Naive thymus-derived CD4-positive, alpha-beta T cell (primary cell): ENCODE measurements at regions of chr19 and their contacts with region 1.

Region 1: GRCh38 chr19:8641908-8642547 is 11.6 kb downstream of the NFILZ start:
- DNase-seq: peak in 7 of 9 donors; percentile 28 to 67 (median 51)
- ATAC-seq: peak; percentile 56
- H3K4me3 ChIP-seq: no peak overlapping the region
- H3K4me3 Mint-ChIP-seq: peak overlapping the region in 1 of 10 donors; percentile 18
- H3K27ac ChIP-seq: no peak overlapping the region
- H3K27ac Mint-ChIP-seq: peak overlapping the region in 1 of 9 donors; percentile 62
- H3K4me1 ChIP-seq: no peaks in the 10 kb centered on the region
- H3K4me1 Mint-ChIP-seq: peaks cover 5 to 16% (median 7%) of the 10 kb centered on the region in 7 donors
- H3K27me3 ChIP-seq: no peaks in the 10 kb centered on the region
- H3K27me3 Mint-ChIP-seq: peaks cover 12 to 32% (median 15%) of the 10 kb centered on the region in 5 donors

Region 2: DNA sequence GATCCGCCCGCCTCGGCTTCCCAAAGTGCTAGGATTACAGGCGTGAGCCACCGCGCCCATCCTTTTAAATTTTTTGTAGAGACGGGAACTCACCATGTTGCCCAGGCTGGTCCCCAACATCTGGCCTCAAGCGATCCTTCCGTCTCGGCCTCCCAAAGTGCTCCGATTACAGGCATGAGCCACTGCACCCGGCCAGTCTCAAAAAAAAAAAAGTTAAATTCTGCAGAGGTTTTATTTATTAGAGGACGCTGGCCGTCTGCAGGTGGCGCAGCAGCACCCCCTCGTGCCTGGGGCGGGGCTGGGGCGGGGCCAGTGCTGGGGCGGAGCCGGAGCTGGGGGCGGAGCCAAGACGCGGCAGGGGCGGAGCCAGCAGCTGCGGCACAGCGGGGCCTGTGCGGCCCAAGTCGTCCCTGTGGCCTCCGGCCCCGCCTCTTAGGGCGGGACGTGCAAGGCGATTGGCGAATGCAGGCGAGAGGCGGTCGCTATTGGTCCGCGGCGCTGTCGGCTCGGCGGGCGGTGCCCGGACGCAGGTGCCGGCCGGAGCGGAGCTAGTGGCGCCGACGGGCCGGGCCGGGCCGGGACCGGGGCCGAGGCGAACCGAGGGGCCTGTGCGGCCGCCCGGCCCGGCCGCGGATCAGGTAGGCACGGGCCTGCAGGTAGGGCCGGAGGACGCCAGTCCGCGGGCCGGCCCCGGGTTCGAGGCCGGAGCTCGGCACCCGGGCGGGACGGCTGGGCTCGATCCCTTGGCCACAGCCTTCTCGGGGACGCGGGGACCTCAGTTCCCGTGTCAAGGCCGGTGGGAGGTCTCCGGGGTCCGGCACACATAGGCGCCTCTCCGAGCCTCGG is 229.0 kb before region 1 on chr19 and contains the start of gene MARCHF2:
- CTCF ChIA-PET with region 1: interaction called, 5 read pairs
- POLR2A ChIA-PET with region 1: no interaction called
- intact Hi-C with region 1: loop called in 1 of 2 experiments (anchors 1 kb)
- DNase-seq: peak; percentile 91 to 96 (median 93)
- ATAC-seq: peak; percentile 100
- H3K4me3 ChIP-seq: peak within 1 kb of the TSS; percentile 72
- H3K4me3 Mint-ChIP-seq: peak within 1 kb of the TSS; percentile 58 to 85 (median 71)
- H3K27ac ChIP-seq: peak within 1 kb of the TSS; percentile 76
- H3K27ac Mint-ChIP-seq: peak within 1 kb of the TSS in 6 of 9 donors; percentile 11 to 84 (median 34)
- H3K4me1 ChIP-seq: peaks cover 0 to 6% of the 10 kb centered on the region in 2 donors
- H3K4me1 Mint-ChIP-seq: peaks cover 0 to 15% (median 13%) of the 10 kb centered on the region in 7 donors
- H3K27me3 ChIP-seq: no peaks in the 10 kb centered on the region
- H3K27me3 Mint-ChIP-seq: no peaks in the 10 kb centered on the region
- total RNA-seq, gene MARCHF2: 18.0 to 42.1 (median 23.4) TPM

Region 3: DNA sequence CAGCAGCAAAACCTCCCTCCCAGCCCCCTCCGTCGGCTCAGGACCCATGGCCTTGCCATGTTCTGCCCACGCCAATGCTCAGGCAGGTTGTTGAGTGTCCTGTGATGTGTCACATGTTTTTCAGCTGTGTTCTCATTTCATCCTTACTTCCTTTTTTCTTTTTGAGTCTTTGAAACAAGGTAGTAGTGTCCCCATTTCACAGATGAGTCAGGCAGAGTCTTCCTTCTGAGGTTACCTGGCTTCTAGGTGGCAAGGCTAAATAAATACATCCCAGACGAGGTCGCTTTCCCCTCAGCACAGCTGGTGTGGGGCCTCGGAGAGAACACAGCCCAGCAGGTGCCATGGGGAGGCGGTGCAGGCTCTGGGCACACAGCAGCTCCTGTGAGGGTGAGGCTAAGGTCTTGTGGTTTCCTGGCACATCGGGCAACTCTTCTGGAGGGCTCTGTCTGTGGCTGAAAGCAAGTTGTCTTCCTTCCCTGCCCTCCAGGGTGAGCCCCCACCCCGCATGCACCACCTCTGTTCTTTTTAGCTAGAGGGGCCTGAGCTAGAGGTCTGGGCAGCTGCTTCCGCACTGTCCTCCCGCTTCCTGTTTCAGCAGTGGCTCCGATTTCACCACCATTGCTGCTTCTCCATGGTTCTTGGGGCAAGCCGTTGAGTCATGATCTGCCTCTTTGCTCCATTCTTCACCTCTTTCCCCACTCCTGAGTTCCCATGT is 154.7 kb before region 1 on chr19:
- CTCF ChIA-PET with region 1: no interaction called
- POLR2A ChIA-PET with region 1: no interaction called
- intact Hi-C with region 1: loop called in 1 of 2 experiments (anchors 1 kb)
- DNase-seq: peak; percentile 38 to 73 (median 59)
- ATAC-seq: peak; percentile 79
- H3K4me3 ChIP-seq: no peak overlapping the region
- H3K4me3 Mint-ChIP-seq: peak overlapping the region; percentile 33 to 85 (median 68)
- H3K27ac ChIP-seq: peak overlapping the region; percentile 48
- H3K27ac Mint-ChIP-seq: peak overlapping the region; percentile 82 to 95 (median 90)
- H3K4me1 ChIP-seq: peaks cover 15 to 26% of the 10 kb centered on the region in 2 donors
- H3K4me1 Mint-ChIP-seq: peaks cover 29 to 47% (median 34%) of the 10 kb centered on the region in 7 donors
- H3K27me3 ChIP-seq: no peaks in the 10 kb centered on the region
- H3K27me3 Mint-ChIP-seq: no peaks in the 10 kb centered on the region

Region 4: GRCh38 chr19:8681345-8682029 is 39.5 kb after region 1 on chr19:
- CTCF ChIA-PET with region 1: no interaction called
- POLR2A ChIA-PET with region 1: no interaction called
- intact Hi-C with region 1: no loop called
- DNase-seq: no peak
- ATAC-seq: peak; percentile 61
- H3K4me3 ChIP-seq: no peak overlapping the region
- H3K4me3 Mint-ChIP-seq: peak overlapping the region in 1 of 10 donors; percentile 29
- H3K27ac ChIP-seq: no peak overlapping the region
- H3K27ac Mint-ChIP-seq: peak overlapping the region in 2 of 9 donors; percentile 20 to 33
- H3K4me1 ChIP-seq: no peaks in the 10 kb centered on the region
- H3K4me1 Mint-ChIP-seq: peaks cover 0 to 29% (median 3%) of the 10 kb centered on the region in 7 donors
- H3K27me3 ChIP-seq: no peaks in the 10 kb centered on the region
- H3K27me3 Mint-ChIP-seq: peaks cover 0 to 1% (median 0%) of the 10 kb centered on the region in 5 donors